Endothelial cell of umbilical vein (primary cell): ENCODE measurements at regions of chr7 and their contacts with region 1.

Region 1: GRCh38 chr7:100342765-100343164 is 15.2 kb upstream of the PILRB start:
- DNase-seq: no peak
- H3K4me3 ChIP-seq: no peak overlapping the region
- H3K27ac ChIP-seq: no peak overlapping the region
- H3K4me1 ChIP-seq: peaks cover 4% of the 10 kb centered on the region
- H3K27me3 ChIP-seq: no peaks in the 10 kb centered on the region
- CTCF ChIP-seq: no peak
- POLR2A ChIP-seq: no peak

Region 2: GRCh38 chr7:99918959-99919813 is 423.6 kb before region 1 on chr7 and contains the start of gene TRIM4:
- CTCF ChIA-PET with region 1: no interaction called
- POLR2A ChIA-PET with region 1: no interaction called
- dilution Hi-C with region 1: no loop called
- intact Hi-C with region 1: no loop called
- DNase-seq: peak; percentile 90
- H3K4me3 ChIP-seq: peak within 1 kb of the TSS; percentile 51 to 84 (median 58)
- H3K27ac ChIP-seq: peak within 1 kb of the TSS; percentile 63
- H3K4me1 ChIP-seq: peaks cover 17% of the 10 kb centered on the region
- H3K27me3 ChIP-seq: no peaks in the 10 kb centered on the region
- CTCF ChIP-seq: peak; percentile 13 to 42
- POLR2A ChIP-seq: peak; percentile 77
- total RNA-seq, gene TRIM4: 19.1 and 22.1 TPM in 2 replicates

Region 3: DNA sequence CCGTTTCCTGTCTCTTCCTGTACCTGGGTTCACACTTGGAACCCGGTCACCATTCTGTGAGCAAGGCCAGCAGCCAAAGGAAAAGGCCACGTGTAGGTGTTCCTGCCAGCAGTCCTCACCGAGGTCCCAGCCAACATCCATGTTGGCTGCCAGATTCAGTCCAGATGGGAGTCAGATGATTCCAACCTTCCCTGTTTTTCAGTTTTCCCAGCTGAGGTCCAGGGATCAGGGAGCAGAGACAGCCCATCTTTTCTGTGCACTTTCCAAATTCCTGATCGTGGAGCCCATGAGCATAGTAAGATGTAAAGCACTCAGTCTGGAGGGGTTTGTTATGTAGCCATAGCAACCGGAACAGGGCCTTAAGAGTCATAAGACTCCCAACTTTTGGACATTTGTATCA is 126.9 kb before region 1 on chr7:
- CTCF ChIA-PET with region 1: no interaction called
- POLR2A ChIA-PET with region 1: no interaction called
- dilution Hi-C with region 1: no loop called
- intact Hi-C with region 1: loop called (anchors 2 kb)
- DNase-seq: no peak
- H3K4me3 ChIP-seq: no peak overlapping the region
- H3K27ac ChIP-seq: no peak overlapping the region
- H3K4me1 ChIP-seq: no peaks in the 10 kb centered on the region
- H3K27me3 ChIP-seq: peaks cover 2 to 5% of the 10 kb centered on the region in 2 experiments
- CTCF ChIP-seq: no peak
- POLR2A ChIP-seq: no peak

Region 4: DNA sequence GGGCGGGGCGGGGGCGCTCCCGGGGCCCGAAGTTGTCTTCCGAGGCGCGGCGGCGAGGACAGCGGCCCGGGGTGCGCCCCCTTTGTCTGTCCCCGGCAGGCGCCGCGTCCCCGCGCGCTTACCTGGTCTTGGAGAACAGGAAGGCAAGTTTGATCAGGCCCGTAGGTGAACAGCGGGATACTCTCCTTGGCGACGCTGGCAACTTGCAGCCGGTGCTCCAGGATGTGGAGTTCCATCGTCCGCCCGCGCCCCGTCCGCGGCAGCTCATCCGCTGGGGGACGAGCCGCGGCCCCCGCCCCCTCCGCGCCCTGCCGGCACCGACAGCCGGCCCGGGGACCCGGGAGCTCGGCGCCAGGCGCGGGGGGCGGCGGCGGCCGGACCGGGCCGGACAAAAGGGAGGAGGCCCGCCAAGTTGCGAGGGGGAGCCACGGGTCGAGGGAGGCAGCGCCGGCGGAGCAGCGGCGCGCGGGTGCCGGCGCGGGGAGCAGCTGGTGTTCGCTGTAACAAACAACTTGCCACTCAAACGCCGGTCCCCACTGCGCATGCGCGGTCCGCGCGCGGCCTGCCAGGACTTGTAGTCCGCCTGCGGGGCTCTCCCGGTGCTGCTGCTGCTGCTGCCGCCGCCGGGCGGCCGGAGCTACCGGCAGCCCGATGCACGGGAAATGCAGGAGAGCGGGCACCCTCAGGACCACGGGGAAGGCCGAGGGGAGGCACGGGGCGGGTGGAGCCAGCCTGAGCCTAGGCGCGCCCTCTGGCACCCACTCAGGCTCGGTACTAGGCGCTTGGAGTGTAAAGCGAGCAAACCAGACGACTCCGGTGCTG is 70.8 kb before region 1 on chr7:
- CTCF ChIA-PET with region 1: interaction called, 3 read pairs
- POLR2A ChIA-PET with region 1: no interaction called
- dilution Hi-C with region 1: no loop called
- intact Hi-C with region 1: loop called (anchors 10 kb)
- DNase-seq: peak; percentile 91
- H3K4me3 ChIP-seq: peak overlapping the region; percentile 41 to 68 (median 59)
- H3K27ac ChIP-seq: no peak overlapping the region
- H3K4me1 ChIP-seq: peaks cover 7% of the 10 kb centered on the region
- H3K27me3 ChIP-seq: no peaks in the 10 kb centered on the region
- CTCF ChIP-seq: peak; percentile 10 to 45
- POLR2A ChIP-seq: no peak